OCI-LY7 (cell line): ENCODE measurements at regions of chr9 and their contacts with region 1.

Region 1: GRCh38 chr9:130042833-130043653 is at the start of gene FNBP1:
- DNase-seq: peak; percentile 84
- H3K4me3 ChIP-seq: peak within 1 kb of the TSS; percentile 94
- H3K27ac ChIP-seq: peak within 1 kb of the TSS; percentile 98
- H3K4me1 ChIP-seq: peaks cover 53% of the 10 kb centered on the region
- CTCF ChIP-seq: no peak
- total RNA-seq, gene FNBP1: 93.3 and 117 TPM in 2 replicates

Region 2: DNA sequence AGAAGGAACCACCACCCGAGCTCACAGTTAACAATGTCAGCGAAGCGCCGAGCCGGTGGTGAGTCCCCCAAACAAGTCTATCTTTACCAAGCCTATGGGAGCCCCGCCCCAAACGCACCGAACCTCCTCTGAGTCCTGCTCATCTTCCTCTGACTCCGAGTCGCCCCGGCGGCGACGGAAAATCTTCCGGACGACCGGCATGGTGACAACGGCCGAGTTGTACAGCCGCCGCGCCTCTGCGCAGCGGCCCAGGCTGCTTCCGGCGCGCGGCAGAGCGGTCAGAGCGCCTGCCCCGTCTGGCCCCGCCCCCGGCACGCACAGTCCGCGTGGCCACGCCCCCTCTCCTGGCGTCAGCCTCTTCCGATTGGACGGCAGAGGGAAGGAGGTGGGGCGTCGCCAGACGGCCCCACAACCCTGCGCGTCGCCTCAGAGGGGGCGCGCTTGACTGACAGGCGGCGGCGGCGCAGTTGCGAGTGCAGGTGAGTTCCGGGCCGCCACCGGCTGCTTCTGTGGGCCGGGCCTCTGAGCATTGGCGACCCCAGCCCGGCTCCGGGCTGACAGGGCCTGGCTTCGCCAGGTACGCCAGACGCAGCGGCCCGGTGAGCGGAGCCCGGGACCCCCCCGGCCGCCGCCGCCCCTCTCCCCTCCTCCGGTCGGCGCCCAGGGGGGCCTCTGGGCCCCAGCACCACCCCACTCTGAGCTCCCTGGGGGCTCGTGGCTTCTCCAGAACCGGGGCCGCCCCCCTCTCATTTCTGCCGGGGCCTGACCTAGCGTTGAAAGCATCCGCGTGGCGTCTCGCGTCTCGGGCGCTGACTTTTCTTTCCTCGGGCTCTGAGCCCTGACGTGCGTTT is 207.8 kb before region 1 on chr9 and contains the starts of genes C9orf78 and USP20:
- CTCF ChIA-PET with region 1: no interaction called
- POLR2A ChIA-PET with region 1: no interaction called
- intact Hi-C with region 1: loop called (anchors 2 kb)
- DNase-seq: peak; percentile 99
- H3K4me3 ChIP-seq: peak within 1 kb of the TSS; percentile 93
- H3K27ac ChIP-seq: peak within 1 kb of the TSS; percentile 49
- H3K4me1 ChIP-seq: peaks cover 46% of the 10 kb centered on the region
- CTCF ChIP-seq: no peak
- total RNA-seq, gene C9orf78: 49.4 and 57.6 TPM in 2 replicates
- total RNA-seq, gene USP20: 14.4 and 15.5 TPM in 2 replicates

Region 3: GRCh38 chr9:129962889-129963703 is 79.9 kb before region 1 on chr9:
- CTCF ChIA-PET with region 1: no interaction called
- POLR2A ChIA-PET with region 1: interaction called, 8 read pairs
- intact Hi-C with region 1: loop called (anchors 2 kb)
- DNase-seq: peak; percentile 79
- H3K4me3 ChIP-seq: peak overlapping the region; percentile 60
- H3K27ac ChIP-seq: peak overlapping the region; percentile 74
- H3K4me1 ChIP-seq: peaks cover 37% of the 10 kb centered on the region
- CTCF ChIP-seq: no peak

Region 4: DNA sequence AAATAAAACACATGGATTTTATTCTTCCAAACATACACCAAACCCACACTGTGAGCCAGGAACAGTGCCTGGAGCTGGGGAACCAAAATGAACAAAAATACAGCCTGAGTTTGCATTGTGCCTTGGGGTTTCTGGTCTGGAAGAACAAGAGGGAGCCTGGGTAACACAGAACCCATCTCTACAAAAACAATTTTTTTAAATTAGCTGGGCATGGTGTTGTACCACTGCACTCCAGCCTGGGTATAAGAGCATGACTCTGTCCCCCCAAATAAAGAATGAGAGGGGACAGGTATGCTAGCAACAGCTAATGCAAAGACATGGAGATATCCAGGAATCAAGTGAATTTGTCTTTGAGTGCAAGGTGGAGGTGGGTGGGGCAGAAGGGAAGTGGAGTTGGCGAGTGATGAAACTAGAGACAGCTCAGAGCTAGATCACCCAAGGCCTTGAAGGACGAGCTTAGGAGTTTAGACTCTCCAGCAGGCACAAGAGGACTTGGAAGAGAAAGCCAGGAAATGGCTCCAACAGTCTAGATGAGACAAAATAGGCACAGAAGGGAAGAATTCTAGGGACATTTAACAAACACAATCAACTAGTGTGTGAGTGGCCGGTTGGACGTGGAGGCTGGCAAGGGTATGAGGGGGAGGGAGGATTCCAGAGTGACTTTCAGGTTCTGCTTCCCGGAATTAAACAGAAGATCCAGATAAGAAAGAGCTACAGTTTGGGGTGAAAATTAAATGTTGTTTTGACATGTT is 47.5 kb before region 1 on chr9:
- CTCF ChIA-PET with region 1: interaction called, 3 read pairs
- POLR2A ChIA-PET with region 1: interaction called, 16 read pairs
- intact Hi-C with region 1: loop called (anchors 2 kb)
- DNase-seq: peak; percentile 48
- H3K4me3 ChIP-seq: peak overlapping the region; percentile 47
- H3K27ac ChIP-seq: peak overlapping the region; percentile 96
- H3K4me1 ChIP-seq: peaks cover 94% of the 10 kb centered on the region
- CTCF ChIP-seq: no peak

Region 5: GRCh38 chr9:130053504-130054324 is 10.7 kb after region 1 on chr9 and contains the start of gene GPR107:
- CTCF ChIA-PET with region 1: no interaction called
- POLR2A ChIA-PET with region 1: interaction called, 10 read pairs
- intact Hi-C with region 1: no loop called
- DNase-seq: peak; percentile 75
- H3K4me3 ChIP-seq: peak within 1 kb of the TSS; percentile 92
- H3K27ac ChIP-seq: peak within 1 kb of the TSS; percentile 50
- H3K4me1 ChIP-seq: peaks cover 52% of the 10 kb centered on the region
- CTCF ChIP-seq: no peak
- total RNA-seq, gene GPR107: 8.7 and 10.4 TPM in 2 replicates